Right cardiac atrium (tissue), 5 donors: ENCODE measurements at regions of chr20 and their contacts with region 1.

Region 1: GRCh38 chr20:22675341-22675740 is 91.0 kb upstream of the FOXA2 start:
- DNase-seq: no peak
- ATAC-seq: no peak
- H3K4me3 ChIP-seq: no peak overlapping the region
- H3K27ac ChIP-seq: no peak overlapping the region
- H3K4me1 ChIP-seq: no peaks in the 10 kb centered on the region
- H3K27me3 ChIP-seq: no peaks in the 10 kb centered on the region

Region 2: DNA sequence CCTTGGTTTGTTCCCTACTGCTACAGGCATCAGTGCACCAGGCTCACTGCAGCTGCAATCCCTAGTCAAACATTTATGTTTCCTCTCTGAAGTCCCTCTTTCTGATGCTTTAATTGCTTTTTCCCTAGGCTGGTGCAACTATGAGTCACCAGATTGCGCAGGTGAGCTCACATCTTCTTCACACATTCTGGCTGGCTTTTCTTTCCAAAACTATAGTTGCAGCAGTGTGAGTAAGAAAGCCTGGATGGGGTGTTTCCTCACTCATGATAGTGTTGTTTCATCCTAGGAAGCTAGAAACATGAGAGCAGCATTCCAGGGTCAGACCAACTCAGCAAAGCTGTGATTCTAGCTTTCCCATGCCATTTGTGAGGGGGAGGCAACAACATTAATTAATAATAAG is 673.5 kb before region 1 on chr20:
- intact Hi-C with region 1: loop called in 1 of 4 experiments (anchors 10 kb)
- DNase-seq: no peak
- ATAC-seq: no peak
- H3K4me3 ChIP-seq: no peak overlapping the region
- H3K27ac ChIP-seq: no peak overlapping the region
- H3K4me1 ChIP-seq: no peaks in the 10 kb centered on the region
- H3K27me3 ChIP-seq: no peaks in the 10 kb centered on the region